Gastrocnemius medialis (tissue), 4 donors: ENCODE measurements at regions of chr7 and their contacts with region 1.

Region 1: GRCh38 chr7:12322284-12322902 is 81.3 kb downstream of the VWDE start:
- DNase-seq: no peak
- ATAC-seq: no peak
- H3K4me3 ChIP-seq: no peak overlapping the region
- H3K27ac ChIP-seq: no peak overlapping the region
- H3K4me1 ChIP-seq: no peaks in the 10 kb centered on the region
- H3K27me3 ChIP-seq: no peaks in the 10 kb centered on the region
- CTCF ChIP-seq: peak; percentile 21 to 60 (median 52)
- POLR2A ChIP-seq: no peak

Region 2: GRCh38 chr7:11427686-11428273 is 894.6 kb before region 1 on chr7:
- in situ Hi-C with region 1: loop called in 3 of 4 experiments (anchors 10 to 25 kb)
- intact Hi-C with region 1: loop called (anchors 2 kb)
- DNase-seq: no peak
- ATAC-seq: no peak
- H3K4me3 ChIP-seq: no peak overlapping the region
- H3K27ac ChIP-seq: no peak overlapping the region
- H3K4me1 ChIP-seq: no peaks in the 10 kb centered on the region
- H3K27me3 ChIP-seq: no peaks in the 10 kb centered on the region
- CTCF ChIP-seq: peak in 4 of 5 experiments; percentile 37 to 61 (median 47)
- POLR2A ChIP-seq: no peak

Region 3: DNA sequence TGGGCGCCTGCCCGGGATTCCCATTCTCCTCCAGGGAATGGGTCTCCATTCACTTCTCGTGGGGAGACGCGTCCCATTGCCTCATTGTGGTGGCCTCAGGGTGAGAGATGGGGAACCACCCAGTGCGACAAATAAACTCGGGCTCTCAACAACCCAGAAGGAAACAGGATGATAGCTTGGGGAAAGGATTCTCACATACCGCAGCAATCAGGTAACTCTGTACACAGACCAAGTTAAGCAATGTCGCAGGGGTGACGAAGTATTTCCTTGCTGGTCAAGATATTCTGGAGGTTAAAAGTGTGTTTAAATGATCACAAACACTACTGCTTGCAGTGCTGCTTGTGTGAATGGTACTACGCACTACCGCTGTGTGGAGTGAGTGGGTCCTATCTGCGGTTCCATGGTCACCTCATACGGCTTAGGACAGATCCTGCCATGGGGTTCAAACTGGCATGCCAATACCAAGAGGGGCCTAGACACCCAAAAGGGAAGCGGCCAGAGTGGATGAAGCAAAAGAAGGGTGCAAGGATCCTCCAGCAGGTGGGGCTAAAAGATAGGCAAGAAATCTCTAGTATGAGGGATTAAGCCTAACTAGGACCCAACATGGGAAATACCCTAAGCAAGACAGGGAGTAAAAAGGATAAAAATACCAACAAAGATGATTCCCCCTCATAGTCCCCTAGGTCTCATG is 255.1 kb before region 1 on chr7:
- in situ Hi-C with region 1: loop called in 3 of 4 experiments (anchors 10 to 25 kb)
- intact Hi-C with region 1: loop called (anchors 5 kb)
- DNase-seq: no peak
- ATAC-seq: no peak
- H3K4me3 ChIP-seq: no peak overlapping the region
- H3K27ac ChIP-seq: no peak overlapping the region
- H3K4me1 ChIP-seq: no peaks in the 10 kb centered on the region
- H3K27me3 ChIP-seq: no peaks in the 10 kb centered on the region
- CTCF ChIP-seq: peak in 4 of 5 experiments; percentile 14 to 49 (median 44)
- POLR2A ChIP-seq: no peak

Region 4: GRCh38 chr7:12291870-12292269 is 30.5 kb before region 1 on chr7:
- in situ Hi-C with region 1: no loop called
- intact Hi-C with region 1: no loop called
- DNase-seq: no peak
- ATAC-seq: no peak
- H3K4me3 ChIP-seq: no peak overlapping the region
- H3K27ac ChIP-seq: no peak overlapping the region
- H3K4me1 ChIP-seq: no peaks in the 10 kb centered on the region
- H3K27me3 ChIP-seq: no peaks in the 10 kb centered on the region
- CTCF ChIP-seq: no peak
- POLR2A ChIP-seq: no peak